AG04449 (cell line): ENCODE measurements at regions of chr6 and their contacts with region 1.

Region 1: GRCh38 chr6:150395398-150396009 is 26.7 kb downstream of the IYD start:
- DNase-seq: no peak
- H3K4me3 ChIP-seq: no peak overlapping the region
- CTCF ChIP-seq: peak; percentile 62

Region 2: DNA sequence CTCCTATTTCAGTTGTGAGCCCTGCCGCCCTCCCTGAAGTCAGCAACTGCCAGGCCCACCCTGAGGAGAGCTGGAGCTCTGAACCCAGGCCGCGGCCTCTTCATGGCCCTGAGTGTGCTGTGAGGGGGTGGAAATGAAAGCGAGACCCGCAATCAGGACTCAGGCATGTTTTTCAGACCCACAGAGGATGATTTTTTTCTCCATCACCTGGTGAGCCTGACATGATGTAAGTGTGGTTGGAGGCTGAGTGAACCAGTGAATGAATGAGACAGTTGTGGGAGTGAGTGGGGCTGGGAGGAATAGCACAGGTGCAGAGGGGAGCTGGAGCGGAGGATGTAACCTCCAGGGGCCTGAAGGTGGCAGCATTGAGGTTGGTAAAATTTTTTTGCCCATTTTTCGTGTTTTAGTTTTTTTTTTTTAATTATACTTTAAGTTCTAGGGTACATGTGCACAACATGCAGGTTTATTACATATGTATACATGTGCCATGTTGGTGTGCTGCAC is 388.5 kb before region 1 on chr6:
- CTCF ChIA-PET with region 1: interaction called, 14 read pairs
- POLR2A ChIA-PET with region 1: no interaction called
- DNase-seq: no peak
- H3K4me3 ChIP-seq: no peak overlapping the region
- CTCF ChIP-seq: peak; percentile 49

Region 3: GRCh38 chr6:150334790-150335783 is 60.4 kb before region 1 on chr6:
- CTCF ChIA-PET with region 1: interaction called, 12 read pairs
- POLR2A ChIA-PET with region 1: no interaction called
- DNase-seq: peak; percentile 46
- H3K4me3 ChIP-seq: no peak overlapping the region
- CTCF ChIP-seq: peak; percentile 71

Region 4: GRCh38 chr6:150377211-150377781 is 18.2 kb before region 1 on chr6:
- CTCF ChIA-PET with region 1: interaction called, 74 read pairs
- POLR2A ChIA-PET with region 1: no interaction called
- DNase-seq: no peak
- H3K4me3 ChIP-seq: no peak overlapping the region
- CTCF ChIP-seq: no peak

Region 5: GRCh38 chr6:150417899-150418826 is 22.7 kb after region 1 on chr6:
- CTCF ChIA-PET with region 1: interaction called, 89 read pairs
- POLR2A ChIA-PET with region 1: no interaction called
- DNase-seq: peak; percentile 36
- H3K4me3 ChIP-seq: peak overlapping the region; percentile 49
- CTCF ChIP-seq: peak; percentile 54